ENCODE measurements at regions of chr6 and their contacts with region 1.

Region 1: DNA sequence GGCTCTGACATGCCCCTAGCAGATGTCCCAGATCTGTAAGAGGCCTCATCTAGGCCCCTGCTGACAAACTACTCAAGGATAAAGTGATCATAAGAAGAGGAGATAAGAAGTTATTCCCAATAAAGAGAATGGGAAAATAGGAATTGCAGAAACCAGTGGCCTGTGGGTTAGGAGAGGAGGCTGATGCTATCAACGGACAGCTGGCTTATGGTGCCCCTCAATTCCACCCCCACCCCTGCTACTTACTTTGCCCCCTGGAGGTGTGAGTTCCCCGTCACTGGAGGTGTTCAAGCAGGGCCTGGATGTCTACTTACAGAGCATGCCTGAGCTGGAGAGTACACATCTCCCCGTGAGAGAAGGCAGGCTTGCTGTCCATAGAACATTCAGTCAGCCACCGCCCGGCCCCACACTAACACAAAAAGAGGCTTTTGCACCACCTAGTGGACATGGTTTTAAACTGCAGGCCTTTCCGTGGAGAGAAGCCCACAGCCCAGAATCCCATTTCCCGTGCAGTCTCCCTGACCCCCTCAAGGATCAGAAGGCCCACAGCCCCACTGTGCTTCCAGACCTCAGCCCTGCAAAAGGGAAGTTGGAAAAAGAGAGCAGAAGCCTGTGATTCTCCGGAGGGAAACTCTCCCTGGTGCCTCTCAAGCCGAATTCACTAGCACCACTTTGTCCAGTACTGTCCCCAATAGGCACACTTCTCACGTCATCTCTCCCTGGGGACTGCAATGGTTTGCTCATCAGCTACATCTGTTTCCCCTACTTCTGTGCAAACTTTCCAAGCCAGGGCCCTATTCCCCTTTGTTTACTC is 23.8 kb upstream of the BNIP5 start:
- DNase-seq: peak; percentile 85
- H3K4me3 Mint-ChIP-seq: no peak overlapping the region
- H3K27ac Mint-ChIP-seq: no peak overlapping the region
- H3K4me1 Mint-ChIP-seq: peaks cover 47% of the 10 kb centered on the region
- H3K27me3 Mint-ChIP-seq: no peaks in the 10 kb centered on the region
- CTCF ChIP-seq: peak; percentile 82

Region 2: GRCh38 chr6:36123257-36124139 is 236.9 kb before region 1 on chr6:
- CTCF ChIA-PET with region 1: interaction called, 5 read pairs
- intact Hi-C with region 1: loop called (anchors 1 kb)
- DNase-seq: peak; percentile 94
- H3K4me3 Mint-ChIP-seq: peak overlapping the region; percentile 9
- H3K27ac Mint-ChIP-seq: peak overlapping the region; percentile 17
- H3K4me1 Mint-ChIP-seq: peaks cover 25% of the 10 kb centered on the region
- H3K27me3 Mint-ChIP-seq: no peaks in the 10 kb centered on the region
- CTCF ChIP-seq: peak; percentile 77

Region 3: GRCh38 chr6:36858407-36858981 is 498.0 kb after region 1 on chr6:
- CTCF ChIA-PET with region 1: no interaction called
- intact Hi-C with region 1: no loop called
- DNase-seq: no peak
- H3K4me3 Mint-ChIP-seq: no peak overlapping the region
- H3K27ac Mint-ChIP-seq: no peak overlapping the region
- H3K4me1 Mint-ChIP-seq: peaks cover 13% of the 10 kb centered on the region
- H3K27me3 Mint-ChIP-seq: no peaks in the 10 kb centered on the region
- CTCF ChIP-seq: no peak

Measured in Calu3 (cell line).